Heart right ventricle (tissue), 16 donors: ENCODE measurements at regions of chr4 and their contacts with region 1.

Region 1: DNA sequence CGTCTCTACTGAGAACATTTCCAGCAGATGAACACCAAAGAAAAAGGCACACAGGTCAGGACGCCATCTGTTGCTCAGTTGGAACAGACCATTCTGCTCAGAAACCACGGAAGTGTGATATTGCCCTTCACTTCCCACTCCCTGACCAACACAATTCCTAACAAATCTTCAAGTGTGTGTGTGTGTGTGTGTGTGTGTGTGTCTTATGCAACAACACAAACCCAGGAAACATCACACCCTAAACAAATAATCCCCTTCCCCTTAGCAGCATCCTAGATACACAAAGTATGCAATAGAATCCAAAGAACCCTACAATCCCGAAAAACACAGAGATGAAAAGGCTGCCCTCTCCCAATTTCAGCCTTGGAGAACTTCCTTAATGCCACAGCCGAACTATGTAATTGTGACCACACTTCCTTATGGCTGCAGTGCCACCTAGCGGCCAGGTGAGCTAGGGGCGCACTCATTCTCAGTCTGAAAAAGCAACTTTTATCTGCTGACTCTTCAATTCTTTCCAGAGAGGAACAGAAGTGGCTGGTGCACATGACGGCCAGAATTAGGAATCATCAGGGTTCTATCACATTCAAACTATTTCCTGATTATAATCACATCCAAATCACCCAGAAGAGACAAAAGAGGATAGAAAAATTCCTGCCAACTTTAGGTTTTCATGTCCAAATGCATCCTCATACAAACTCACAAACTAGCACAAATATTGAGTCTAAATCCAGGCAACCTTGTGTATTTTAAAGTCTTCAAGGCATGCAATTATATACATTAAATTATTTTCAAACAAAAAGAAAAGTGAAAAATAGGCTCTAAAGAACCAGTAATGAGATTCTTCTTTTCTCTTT is 164.9 kb downstream of the DHX15 start:
- DNase-seq: peak; percentile 69 to 79
- ATAC-seq: peak; percentile 77 to 94 (median 86)
- H3K4me3 ChIP-seq: no peak overlapping the region
- H3K27ac ChIP-seq: no peak overlapping the region
- H3K4me1 ChIP-seq: peaks cover 0 to 5% (median 0%) of the 10 kb centered on the region in 9 donors
- H3K27me3 ChIP-seq: no peaks in the 10 kb centered on the region
- CTCF ChIP-seq: peak; percentile 77 to 93 (median 91)

Region 2: GRCh38 chr4:23368081-23368697 is 1051.2 kb before region 1 on chr4:
- intact Hi-C with region 1: loop called in 2 of 10 experiments (anchors 5 kb)
- DNase-seq: peak in 1 of 2 donors; percentile 44
- ATAC-seq: peak; percentile 50 to 85 (median 80)
- H3K4me3 ChIP-seq: no peak overlapping the region
- H3K27ac ChIP-seq: peak overlapping the region in 3 of 10 donors; percentile 46 to 80 (median 57)
- H3K4me1 ChIP-seq: peaks cover 0 to 21% (median 3%) of the 10 kb centered on the region in 9 donors
- H3K27me3 ChIP-seq: no peaks in the 10 kb centered on the region
- CTCF ChIP-seq: peak; percentile 21 to 65 (median 49)

Region 3: DNA sequence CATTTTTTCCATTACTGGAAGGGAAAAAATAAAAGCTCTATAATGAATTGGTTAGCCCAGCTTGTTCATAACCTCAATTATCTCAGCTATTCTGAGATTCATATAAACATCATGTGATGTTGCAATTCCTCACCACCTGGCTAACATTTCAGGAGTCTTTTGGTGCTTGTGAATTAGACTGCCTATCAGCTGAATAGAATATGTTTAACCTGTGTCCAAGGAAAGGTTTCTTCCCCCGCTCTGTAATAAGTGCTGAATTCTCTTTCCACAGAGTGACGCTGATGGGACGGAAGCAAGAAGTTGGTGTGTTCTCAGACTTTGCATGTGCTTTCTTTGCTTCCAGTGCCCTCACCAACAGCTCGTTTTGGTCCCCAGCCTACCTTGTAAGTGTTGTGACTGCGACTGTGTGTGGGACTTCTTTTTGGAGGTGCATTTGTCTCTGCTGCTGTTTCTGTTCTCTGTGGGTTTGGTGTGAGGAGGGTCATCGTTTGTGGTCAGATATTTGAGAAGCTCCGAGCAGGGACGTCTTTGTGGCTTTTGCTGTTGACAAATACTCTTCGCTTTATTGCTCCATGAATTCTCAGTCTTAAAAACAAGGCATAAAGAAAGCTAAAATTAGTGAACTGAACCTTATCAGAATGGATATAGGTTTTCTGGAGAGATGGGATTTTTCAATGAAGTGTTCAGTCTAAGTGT is 591.2 kb before region 1 on chr4:
- intact Hi-C with region 1: loop called in 1 of 10 experiments (anchors 10 kb)
- DNase-seq: no peak
- ATAC-seq: peak in 2 of 8 donors; percentile 17 to 39
- H3K4me3 ChIP-seq: no peak overlapping the region
- H3K27ac ChIP-seq: peak overlapping the region in 2 of 10 donors; percentile 7 to 49
- H3K4me1 ChIP-seq: peaks cover 0 to 21% (median 0%) of the 10 kb centered on the region in 9 donors
- H3K27me3 ChIP-seq: no peaks in the 10 kb centered on the region
- CTCF ChIP-seq: no peak

Region 4: DNA sequence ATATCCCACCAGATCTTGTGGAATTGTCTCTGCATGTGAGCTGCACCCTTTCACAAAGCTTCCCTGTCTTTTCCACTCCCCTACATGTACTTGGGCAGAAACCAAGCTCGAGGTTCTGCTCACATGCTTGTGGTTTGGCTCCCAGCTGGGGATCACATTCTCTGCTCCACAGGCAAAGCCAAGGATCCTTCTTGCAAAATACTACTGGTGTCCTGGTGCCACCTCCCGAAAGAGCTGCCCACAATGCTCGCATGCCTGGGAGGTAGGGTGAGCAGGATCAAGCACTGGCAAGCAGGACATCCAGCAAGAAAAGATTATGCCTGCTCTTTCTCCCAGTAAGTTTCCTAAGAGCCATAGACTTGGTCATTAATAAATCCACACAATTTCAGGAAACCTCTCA is 484.5 kb before region 1 on chr4:
- intact Hi-C with region 1: loop called in 2 of 10 experiments (anchors 5 to 10 kb)
- DNase-seq: peak; percentile 47 to 74
- ATAC-seq: peak; percentile 58 to 78 (median 71)
- H3K4me3 ChIP-seq: no peak overlapping the region
- H3K27ac ChIP-seq: peak overlapping the region; percentile 2 to 89 (median 62)
- H3K4me1 ChIP-seq: peaks cover 0 to 52% (median 22%) of the 10 kb centered on the region in 9 donors
- H3K27me3 ChIP-seq: no peaks in the 10 kb centered on the region
- CTCF ChIP-seq: peak in 3 of 9 donors; percentile 23 to 42 (median 25)

Region 5: GRCh38 chr4:24244663-24245490 is 174.5 kb before region 1 on chr4:
- intact Hi-C with region 1: loop called in 5 of 10 experiments (anchors 5 to 10 kb)
- DNase-seq: peak; percentile 46 to 75
- ATAC-seq: peak; percentile 73 to 97 (median 92)
- H3K4me3 ChIP-seq: no peak overlapping the region
- H3K27ac ChIP-seq: peak overlapping the region; percentile 29 to 90 (median 78)
- H3K4me1 ChIP-seq: peaks cover 11 to 73% (median 41%) of the 10 kb centered on the region in 9 donors
- H3K27me3 ChIP-seq: no peaks in the 10 kb centered on the region
- CTCF ChIP-seq: no peak